A549 (cell line): ENCODE measurements at regions of chr3 and their contacts with region 1.

Region 1: GRCh38 chr3:56342475-56342874 is 125.8 kb downstream of the ERC2 start:
- DNase-seq: no peak
- ATAC-seq: no peak
- H3K4me3 ChIP-seq: no peak overlapping the region
- H3K27ac ChIP-seq: no peak overlapping the region
- H3K4me1 ChIP-seq: no peaks in the 10 kb centered on the region
- CTCF ChIP-seq: no peak
- EP300 ChIP-seq: no peak
- POLR2A ChIP-seq: no peak
- RAD21 ChIP-seq: no peak

Region 2: DNA sequence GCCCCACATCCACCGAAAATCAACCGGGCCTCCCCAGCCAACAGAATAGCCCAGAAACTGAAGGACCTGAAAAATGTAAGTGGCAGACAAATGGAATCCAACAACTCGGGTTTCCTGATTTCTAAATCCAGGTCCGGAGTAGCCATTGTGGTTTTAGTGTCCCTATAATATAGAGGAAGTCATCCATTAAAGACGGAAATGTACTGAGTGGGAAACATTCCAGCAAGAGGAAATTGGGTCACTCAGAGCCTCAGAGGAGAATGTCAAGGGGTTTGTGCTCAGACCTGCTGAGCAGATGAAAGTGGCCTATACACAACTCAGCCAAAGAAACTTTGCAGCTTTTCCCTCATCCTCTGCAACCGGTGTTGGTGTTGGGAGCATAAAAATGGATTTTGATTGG is 240.9 kb before region 1 on chr3:
- CTCF ChIA-PET with region 1: no interaction called
- POLR2A ChIA-PET with region 1: no interaction called
- DNase-seq: no peak
- ATAC-seq: no peak
- H3K4me3 ChIP-seq: no peak overlapping the region
- H3K27ac ChIP-seq: no peak overlapping the region
- H3K4me1 ChIP-seq: peaks cover 4% of the 10 kb centered on the region; the same call in 1 of the 3 replicates
- CTCF ChIP-seq: no peak
- EP300 ChIP-seq: no peak
- POLR2A ChIP-seq: no peak
- RAD21 ChIP-seq: no peak

Region 3: GRCh38 chr3:56357266-56357665 is 14.8 kb after region 1 on chr3:
- CTCF ChIA-PET with region 1: interaction called, 10 read pairs
- POLR2A ChIA-PET with region 1: no interaction called
- DNase-seq: no peak
- ATAC-seq: no peak
- H3K4me3 ChIP-seq: no peak overlapping the region
- H3K27ac ChIP-seq: no peak overlapping the region
- H3K4me1 ChIP-seq: peaks cover 7% of the 10 kb centered on the region; the same call in 1 of the 3 replicates
- CTCF ChIP-seq: no peak
- EP300 ChIP-seq: no peak
- POLR2A ChIP-seq: no peak
- RAD21 ChIP-seq: no peak

Region 4: DNA sequence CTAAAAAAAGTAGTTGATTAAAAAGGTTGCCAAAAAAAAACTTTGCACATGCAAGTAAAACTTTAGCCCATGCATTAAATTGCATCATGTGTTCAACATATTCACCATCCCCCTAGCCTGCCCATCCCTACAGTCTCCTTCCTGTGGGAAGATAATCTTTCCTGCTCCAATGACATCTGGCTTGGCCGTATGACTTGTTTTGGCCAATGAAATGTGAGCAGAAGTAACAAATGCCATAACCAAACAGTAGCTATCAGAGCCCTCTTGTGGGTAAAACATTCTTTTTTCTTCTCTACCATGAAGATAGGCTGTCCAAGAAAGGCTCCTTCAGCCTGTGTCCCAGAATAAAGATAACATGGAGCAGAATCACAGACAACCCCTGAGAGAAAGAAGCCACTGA is 110.5 kb after region 1 on chr3:
- CTCF ChIA-PET with region 1: interaction called, 15 read pairs
- POLR2A ChIA-PET with region 1: no interaction called
- DNase-seq: peak in 1 of 2 experiments; percentile 4
- ATAC-seq: no peak; a peak in 1 of 6 replicates
- H3K4me3 ChIP-seq: no peak overlapping the region
- H3K27ac ChIP-seq: no peak overlapping the region
- H3K4me1 ChIP-seq: no peaks in the 10 kb centered on the region
- CTCF ChIP-seq: no peak
- EP300 ChIP-seq: no peak
- POLR2A ChIP-seq: no peak
- RAD21 ChIP-seq: no peak

Region 5: DNA sequence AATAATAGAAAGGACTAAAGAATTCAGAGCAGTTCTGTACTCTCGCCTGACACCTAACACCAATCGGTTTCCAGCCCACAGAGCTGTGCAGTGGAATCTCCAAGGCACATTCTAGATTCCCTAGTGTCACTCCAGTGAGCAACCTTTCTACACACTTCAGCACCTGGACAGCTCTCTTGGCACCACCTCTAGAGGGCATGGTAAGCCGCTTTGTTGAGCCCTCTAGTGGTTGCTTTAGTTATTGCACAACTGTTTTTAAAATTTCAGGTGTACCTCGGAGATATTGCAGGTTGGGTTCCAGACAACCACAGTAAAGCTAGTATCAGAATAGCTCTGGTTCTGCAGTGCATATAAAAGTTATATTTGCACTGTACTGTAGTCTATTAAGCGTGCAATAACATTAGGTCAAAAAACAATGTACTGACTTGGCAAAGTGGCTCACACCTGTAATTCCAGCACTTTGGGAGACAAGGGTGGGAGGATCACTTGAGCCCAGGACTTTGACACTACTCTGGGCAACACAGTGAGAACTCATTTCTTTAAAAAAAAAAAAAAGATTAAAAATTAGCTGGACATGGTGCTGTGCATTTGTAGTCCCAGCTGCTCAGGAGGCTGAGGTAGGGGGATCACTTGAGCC is 152.3 kb after region 1 on chr3:
- CTCF ChIA-PET with region 1: interaction called, 11 read pairs
- POLR2A ChIA-PET with region 1: no interaction called
- DNase-seq: peak; percentile 62 to 78
- ATAC-seq: peak; percentile 89 to 93
- H3K4me3 ChIP-seq: no peak overlapping the region
- H3K27ac ChIP-seq: no peak overlapping the region
- H3K4me1 ChIP-seq: no peaks in the 10 kb centered on the region
- CTCF ChIP-seq: peak; percentile 76
- EP300 ChIP-seq: no peak
- POLR2A ChIP-seq: no peak
- RAD21 ChIP-seq: peak; percentile 51 to 52

Region 6: GRCh38 chr3:56547486-56547885 is 205.0 kb after region 1 on chr3:
- CTCF ChIA-PET with region 1: interaction called, 13 read pairs
- POLR2A ChIA-PET with region 1: no interaction called
- DNase-seq: peak in 1 of 2 experiments; percentile 16
- ATAC-seq: no peak
- H3K4me3 ChIP-seq: no peak overlapping the region
- H3K27ac ChIP-seq: no peak overlapping the region
- H3K4me1 ChIP-seq: no peaks in the 10 kb centered on the region
- CTCF ChIP-seq: peak; percentile 17; the same call in 1 of the 3 replicates
- EP300 ChIP-seq: no peak
- POLR2A ChIP-seq: no peak
- RAD21 ChIP-seq: peak; percentile 15 to 25; a peak in 1 of 5 replicates